ENCODE measurements at regions of chr1 and their contacts with region 1.

Region 1: DNA sequence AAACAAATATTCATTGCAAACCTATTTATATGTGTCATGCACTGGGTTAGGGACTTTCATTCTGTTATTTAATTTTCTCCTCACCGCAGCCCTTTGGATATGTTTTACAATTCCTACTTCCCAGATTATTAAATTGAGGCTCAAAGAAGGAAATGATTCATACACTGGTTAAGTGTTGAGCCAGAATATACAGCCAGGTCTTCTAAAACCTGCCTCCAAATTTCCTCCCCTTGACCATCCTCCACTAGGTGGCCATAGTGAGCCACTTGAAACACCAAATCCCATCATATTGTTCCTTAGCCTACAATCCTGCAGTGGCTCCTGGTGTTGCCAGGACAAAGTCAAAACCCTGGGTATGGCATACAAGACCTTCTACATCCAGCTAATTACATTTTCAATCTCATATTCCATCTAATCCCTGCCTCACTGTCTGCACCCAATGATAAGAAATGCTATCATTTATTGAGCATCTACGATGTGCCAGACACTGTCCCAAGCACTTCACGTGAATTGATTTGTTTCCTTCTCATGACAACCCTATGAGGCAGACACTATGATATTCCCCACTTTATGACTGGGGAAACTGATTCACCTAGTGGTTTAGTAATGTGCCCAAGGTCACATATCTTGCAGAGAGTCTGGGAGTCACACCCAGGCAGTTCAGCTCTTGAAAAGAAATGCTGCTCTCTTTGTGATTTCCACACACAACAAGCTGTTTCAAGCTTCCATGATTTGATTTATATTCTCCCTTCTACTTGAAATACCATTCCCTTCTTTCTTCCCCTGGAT is 23.6 kb upstream of the KIRREL1 start:
- DNase-seq: peak; percentile 18
- ATAC-seq: no peak
- H3K4me3 ChIP-seq: no peak overlapping the region
- H3K4me3 Mint-ChIP-seq: no peak overlapping the region
- H3K27ac ChIP-seq: no peak overlapping the region
- H3K27ac Mint-ChIP-seq: no peak overlapping the region
- H3K4me1 ChIP-seq: no peaks in the 10 kb centered on the region
- H3K4me1 Mint-ChIP-seq: peaks cover 2% of the 10 kb centered on the region
- H3K27me3 ChIP-seq: no peaks in the 10 kb centered on the region
- H3K27me3 Mint-ChIP-seq: peaks cover 15% of the 10 kb centered on the region
- CTCF ChIP-seq: peak; percentile 59

Region 2: DNA sequence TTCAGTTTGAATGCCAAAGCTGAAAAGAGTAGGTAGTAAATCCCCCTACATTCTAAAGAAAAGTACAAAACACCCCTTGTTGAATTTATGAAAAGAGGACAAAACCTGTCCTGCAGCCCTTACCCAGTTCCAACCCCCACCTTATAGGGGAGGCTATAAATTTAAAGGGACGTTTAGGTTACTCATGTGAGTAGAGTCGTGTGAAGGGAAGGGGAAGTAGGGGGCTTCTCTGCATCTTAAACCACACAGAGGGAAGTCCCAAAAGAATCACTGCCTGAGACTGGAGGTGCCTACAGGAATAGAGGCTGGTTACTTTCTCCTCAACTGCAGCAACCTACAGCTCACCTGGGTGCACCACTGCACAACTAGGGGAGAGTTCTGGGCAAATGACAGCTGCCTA is 13.2 kb before region 1 on chr1:
- CTCF ChIA-PET with region 1: interaction called, 13 read pairs
- POLR2A ChIA-PET with region 1: no interaction called
- intact Hi-C with region 1: no loop called
- DNase-seq: peak; percentile 25
- ATAC-seq: no peak
- H3K4me3 ChIP-seq: no peak overlapping the region
- H3K4me3 Mint-ChIP-seq: no peak overlapping the region
- H3K27ac ChIP-seq: no peak overlapping the region
- H3K27ac Mint-ChIP-seq: no peak overlapping the region
- H3K4me1 ChIP-seq: peaks cover 23% of the 10 kb centered on the region in 2 donors
- H3K4me1 Mint-ChIP-seq: peaks cover 21% of the 10 kb centered on the region
- H3K27me3 ChIP-seq: peaks cover 0 to 2% (median 0%) of the 10 kb centered on the region in 4 experiments
- H3K27me3 Mint-ChIP-seq: peaks cover 6% of the 10 kb centered on the region
- CTCF ChIP-seq: no peak

Region 3: GRCh38 chr1:157984469-157984868 is 14.6 kb after region 1 on chr1:
- CTCF ChIA-PET with region 1: interaction called, 19 read pairs
- POLR2A ChIA-PET with region 1: no interaction called
- intact Hi-C with region 1: loop called (anchors 1 kb)
- DNase-seq: no peak
- ATAC-seq: no peak
- H3K4me3 ChIP-seq: no peak overlapping the region
- H3K4me3 Mint-ChIP-seq: no peak overlapping the region
- H3K27ac ChIP-seq: no peak overlapping the region
- H3K27ac Mint-ChIP-seq: no peak overlapping the region
- H3K4me1 ChIP-seq: no peaks in the 10 kb centered on the region
- H3K4me1 Mint-ChIP-seq: no peaks in the 10 kb centered on the region
- H3K27me3 ChIP-seq: peaks cover 0 to 7% (median under 1%) of the 10 kb centered on the region in 4 experiments
- H3K27me3 Mint-ChIP-seq: peaks cover 30% of the 10 kb centered on the region
- CTCF ChIP-seq: no peak